ENCODE measurements at regions of chr1 and their contacts with region 1.

Region 1: GRCh38 chr1:45359882-45360513 is 19.8 kb upstream of the MUTYH start:
- DNase-seq: peak; percentile 48
- H3K4me3 ChIP-seq: peak overlapping the region; percentile 43
- H3K27ac ChIP-seq: peak overlapping the region; percentile 76
- H3K4me1 ChIP-seq: peaks cover 24% of the 10 kb centered on the region
- H3K27me3 ChIP-seq: no peaks in the 10 kb centered on the region
- CTCF ChIP-seq: peak; percentile 80

Region 2: DNA sequence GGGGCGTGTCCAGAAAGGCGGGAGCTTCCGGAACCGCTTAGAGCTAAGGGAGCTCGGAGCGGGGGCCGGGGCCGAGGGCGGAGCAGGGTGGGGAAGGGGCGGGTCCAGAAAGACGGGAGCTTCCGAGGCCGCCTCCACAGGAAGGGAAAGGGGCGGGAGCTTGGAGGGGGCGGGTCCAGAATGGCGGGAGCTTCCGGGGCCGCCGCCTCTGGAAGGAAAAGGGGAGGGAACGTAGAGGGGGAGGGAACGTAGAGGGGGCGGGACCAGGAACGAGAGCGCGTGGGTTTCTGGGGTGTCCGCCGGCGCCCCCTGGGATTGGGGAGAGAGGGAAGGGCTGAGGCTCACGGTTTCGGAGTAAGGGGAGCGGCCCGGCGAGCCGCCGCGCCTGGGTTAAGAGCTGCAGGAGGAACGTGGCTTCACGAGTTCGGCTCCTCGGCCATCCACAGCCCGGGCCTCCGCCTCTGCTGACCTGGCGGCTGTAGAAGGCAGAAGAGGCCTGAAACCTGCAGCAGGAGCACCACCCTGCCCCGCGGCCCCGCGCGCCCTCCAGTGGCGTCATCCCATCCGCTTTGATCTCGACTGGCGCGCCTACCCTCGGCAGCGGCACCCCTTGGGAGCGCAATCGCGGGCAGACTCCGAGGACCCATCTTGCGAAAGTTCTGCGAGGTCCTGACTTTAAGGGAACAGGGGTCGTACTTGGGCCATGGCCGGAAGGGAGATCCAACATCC is 56.3 kb before region 1 on chr1:
- intact Hi-C with region 1: no loop called
- DNase-seq: peak; percentile 99
- H3K4me3 ChIP-seq: peak overlapping the region; percentile 87
- H3K27ac ChIP-seq: peak overlapping the region; percentile 97
- H3K4me1 ChIP-seq: peaks cover 21% of the 10 kb centered on the region
- H3K27me3 ChIP-seq: no peaks in the 10 kb centered on the region
- CTCF ChIP-seq: peak; percentile 69

Region 3: DNA sequence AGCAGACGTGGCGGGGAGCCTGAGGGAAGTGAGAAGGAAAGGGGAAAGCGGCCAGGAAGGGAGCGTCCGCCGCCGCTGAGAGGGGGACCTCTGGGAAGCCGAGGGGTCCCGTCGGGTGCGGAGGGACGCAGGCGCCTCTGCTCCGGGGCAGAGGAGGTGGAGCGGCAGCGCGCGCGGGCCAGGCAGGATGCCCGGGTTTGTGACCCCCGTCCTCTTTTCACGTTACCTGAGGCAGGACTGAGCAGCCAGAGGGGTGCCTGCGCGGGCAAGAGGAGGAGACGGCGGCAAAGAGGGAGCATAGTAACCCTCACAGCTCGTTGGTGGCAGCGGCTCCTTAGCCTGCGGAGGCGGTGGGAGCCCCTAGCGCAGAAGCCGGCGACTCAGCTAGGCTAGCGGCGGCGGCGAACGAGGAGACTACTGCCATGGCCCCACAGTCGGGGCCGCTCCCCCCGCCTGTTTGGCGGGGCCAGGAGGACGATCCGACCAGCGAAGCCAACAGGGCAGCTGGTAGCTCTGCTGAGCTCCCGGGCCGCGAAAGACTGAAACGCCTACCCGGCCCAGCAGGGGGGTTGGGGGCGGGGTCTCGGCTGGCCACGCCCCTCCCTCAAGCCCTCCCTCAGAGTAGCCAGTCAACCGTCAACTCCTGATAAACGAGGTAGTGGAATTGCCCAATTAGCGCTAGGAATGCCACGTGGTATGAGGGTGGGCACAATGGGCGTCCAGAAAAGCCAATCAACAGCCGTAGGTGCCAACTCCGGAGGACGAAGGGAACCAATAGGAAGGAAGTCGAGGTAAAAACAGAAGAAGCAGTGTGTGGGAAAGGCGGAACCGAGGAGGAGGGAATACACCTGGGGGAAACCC is 130.9 kb after region 1 on chr1 and contains the start of gene TESK2:
- intact Hi-C with region 1: loop called (anchors 2 kb)
- DNase-seq: peak; percentile 96
- H3K4me3 ChIP-seq: peak within 1 kb of the TSS; percentile 99
- H3K27ac ChIP-seq: peak within 1 kb of the TSS; percentile 82
- H3K4me1 ChIP-seq: peaks cover 23% of the 10 kb centered on the region
- H3K27me3 ChIP-seq: no peaks in the 10 kb centered on the region
- CTCF ChIP-seq: peak; percentile 41
- total RNA-seq, gene TESK2: 1.4 TPM

Region 4: DNA sequence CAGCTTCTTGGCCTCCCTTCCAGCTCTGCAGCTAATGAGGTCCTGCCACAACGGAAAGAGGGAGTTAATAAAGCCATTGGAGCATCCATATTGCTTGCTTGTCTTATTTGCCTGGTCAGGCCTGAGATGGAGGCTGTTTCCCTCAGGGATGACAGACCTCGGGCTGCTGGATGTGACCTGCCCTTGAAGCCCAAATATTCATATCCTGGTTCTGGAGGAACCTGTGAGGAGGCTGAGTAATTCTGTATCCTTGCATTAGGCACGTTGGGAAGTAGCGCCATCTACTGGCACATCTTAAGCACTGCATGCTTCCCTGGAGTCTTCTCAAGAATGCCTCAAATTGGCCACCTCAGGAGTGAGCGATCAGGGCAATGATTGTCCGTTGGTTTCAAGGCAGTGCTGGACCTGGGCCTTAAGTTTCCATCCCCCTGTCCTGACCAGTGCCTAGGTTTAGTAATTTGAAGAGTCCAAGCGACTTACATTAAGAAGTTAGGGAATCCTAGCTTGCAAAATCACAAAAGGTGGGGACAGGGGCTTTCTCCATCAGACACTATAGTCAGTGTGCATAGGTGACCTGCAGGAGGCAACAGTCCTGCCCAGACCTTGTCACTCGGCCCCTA is 210.1 kb after region 1 on chr1:
- intact Hi-C with region 1: loop called (anchors 10 kb)
- DNase-seq: peak; percentile 44
- H3K4me3 ChIP-seq: no peak overlapping the region
- H3K27ac ChIP-seq: no peak overlapping the region
- H3K4me1 ChIP-seq: peaks cover 13% of the 10 kb centered on the region
- H3K27me3 ChIP-seq: no peaks in the 10 kb centered on the region
- CTCF ChIP-seq: peak; percentile 99

Region 5: DNA sequence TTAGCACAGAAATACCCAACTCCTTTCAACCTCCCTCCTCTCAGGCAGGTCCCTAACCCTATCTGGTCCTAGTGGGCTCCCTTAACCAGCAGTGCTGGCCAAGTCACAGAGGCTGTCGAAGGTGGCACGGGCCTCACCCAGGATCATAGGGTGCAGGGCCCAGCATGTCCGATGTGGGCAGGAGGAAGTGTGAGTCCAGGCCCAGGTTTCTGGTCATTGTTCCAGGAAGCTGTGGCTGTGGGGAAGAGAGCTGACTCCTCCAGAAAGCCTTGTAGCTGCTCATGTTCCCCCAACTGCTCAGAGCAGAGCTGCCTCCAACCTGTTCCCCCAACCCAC is 261.5 kb after region 1 on chr1:
- intact Hi-C with region 1: no loop called
- DNase-seq: no peak
- H3K4me3 ChIP-seq: no peak overlapping the region
- H3K27ac ChIP-seq: peak overlapping the region; percentile 60
- H3K4me1 ChIP-seq: peaks cover 48% of the 10 kb centered on the region
- H3K27me3 ChIP-seq: no peaks in the 10 kb centered on the region
- CTCF ChIP-seq: no peak

Measured in left ventricle myocardium inferior (tissue), 1 donor.